ENCODE measurements at regions of chr2 and their contacts with region 1.

Region 1: GRCh38 chr2:206392118-206392517 is 51.2 kb upstream of the ADAM23 start:
- DNase-seq: peak; percentile 54
- ATAC-seq: peak; percentile 97
- H3K4me3 ChIP-seq: no peak overlapping the region
- H3K27ac ChIP-seq: no peak overlapping the region
- H3K4me1 ChIP-seq: no peaks in the 10 kb centered on the region
- H3K27me3 ChIP-seq: no peaks in the 10 kb centered on the region
- CTCF ChIP-seq: peak; percentile 67
- POLR2A ChIP-seq: no peak
- RAD21 ChIP-seq: peak; percentile 69

Region 2: DNA sequence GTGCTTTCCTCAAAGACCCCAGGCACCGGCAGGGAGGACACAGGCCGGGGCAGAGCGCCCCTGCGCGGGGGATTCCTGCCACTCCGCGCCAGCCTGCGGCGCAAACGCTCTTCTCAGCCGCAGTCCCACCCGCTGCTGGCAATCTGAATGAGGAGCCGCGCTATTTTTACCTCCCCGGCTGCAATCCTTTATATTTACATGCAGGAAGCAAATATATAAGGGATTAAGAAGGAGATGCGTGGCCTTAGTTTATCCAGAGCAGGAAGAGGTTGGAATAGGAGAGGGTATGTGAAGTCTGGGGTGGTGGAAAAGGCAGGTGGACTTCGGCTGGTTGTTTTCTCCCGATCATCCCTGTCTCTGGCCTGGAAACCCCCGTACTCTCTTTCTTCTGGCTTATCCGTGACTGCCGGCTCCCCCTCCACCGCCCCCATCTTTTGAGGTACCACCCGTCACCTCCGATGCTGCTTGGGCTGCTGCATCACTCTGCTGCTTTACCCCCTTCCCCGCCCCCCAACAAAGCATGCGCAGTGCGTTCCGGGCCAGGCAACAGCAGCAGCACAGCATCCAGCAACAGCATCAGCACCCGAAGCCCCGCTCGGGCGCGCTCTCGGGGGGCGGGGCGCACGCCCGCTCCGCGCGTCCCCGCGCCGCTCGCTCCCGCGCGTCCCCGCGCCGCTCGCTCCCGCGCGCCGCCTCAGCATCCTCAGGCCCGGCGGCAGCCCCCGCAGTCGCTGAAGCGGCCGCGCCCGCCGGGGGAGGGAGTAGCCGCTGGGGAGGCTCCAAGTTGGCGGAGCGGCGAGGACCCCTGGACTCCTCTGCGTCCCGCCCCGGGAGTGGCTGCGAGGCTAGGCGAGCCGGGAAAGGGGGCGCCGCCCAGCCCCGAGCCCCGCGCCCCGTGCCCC is 51.0 kb after region 1 on chr2 and contains the start of gene ADAM23:
- CTCF ChIA-PET with region 1: interaction called, 3 read pairs
- POLR2A ChIA-PET with region 1: no interaction called
- dilution Hi-C with region 1: no loop called
- in situ Hi-C with region 1: no loop called
- intact Hi-C with region 1: loop called (anchors 2 kb)
- DNase-seq: peak; percentile 52
- ATAC-seq: peak; percentile 82
- H3K4me3 ChIP-seq: peak within 1 kb of the TSS; percentile 79
- H3K27ac ChIP-seq: peak within 1 kb of the TSS; percentile 60
- H3K4me1 ChIP-seq: no peaks in the 10 kb centered on the region
- H3K27me3 ChIP-seq: peaks cover 24% of the 10 kb centered on the region
- CTCF ChIP-seq: 0 out of 2 replicates have a peak, but pooled peaks have one; percentile 13
- POLR2A ChIP-seq: no peak
- RAD21 ChIP-seq: no peak
- total RNA-seq, gene ADAM23: 2.9 and 3.9 TPM in 2 replicates

Region 3: DNA sequence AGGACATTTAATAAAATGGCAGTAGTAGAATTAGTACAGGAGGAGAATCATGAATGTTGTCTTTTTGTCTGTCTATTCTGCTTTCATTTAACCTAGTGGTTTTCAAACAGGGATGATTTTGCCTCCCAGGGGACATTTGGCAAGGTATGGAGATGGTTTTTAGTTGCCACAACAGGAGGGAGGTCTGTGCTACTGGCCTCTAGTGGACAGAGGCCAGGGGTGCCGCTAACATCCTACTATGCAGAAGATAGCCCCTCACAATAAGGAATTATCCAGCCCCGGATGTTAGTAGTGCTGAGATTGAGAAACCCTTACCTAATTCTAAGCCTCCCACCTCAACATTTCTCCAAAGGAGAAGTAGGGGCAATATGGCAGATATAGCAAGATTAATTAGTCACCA is 391.6 kb after region 1 on chr2:
- CTCF ChIA-PET with region 1: no interaction called
- POLR2A ChIA-PET with region 1: no interaction called
- dilution Hi-C with region 1: no loop called
- in situ Hi-C with region 1: no loop called
- intact Hi-C with region 1: loop called (anchors 1 kb)
- DNase-seq: no peak
- ATAC-seq: peak; percentile 69
- H3K4me3 ChIP-seq: no peak overlapping the region
- H3K27ac ChIP-seq: no peak overlapping the region
- H3K4me1 ChIP-seq: no peaks in the 10 kb centered on the region
- H3K27me3 ChIP-seq: no peaks in the 10 kb centered on the region
- CTCF ChIP-seq: peak; percentile 36
- POLR2A ChIP-seq: no peak
- RAD21 ChIP-seq: no peak

Measured in IMR-90 (cell line).